Right cardiac atrium (tissue), 5 donors: ENCODE measurements at regions of chr4 and their contacts with region 1.

Region 1: DNA sequence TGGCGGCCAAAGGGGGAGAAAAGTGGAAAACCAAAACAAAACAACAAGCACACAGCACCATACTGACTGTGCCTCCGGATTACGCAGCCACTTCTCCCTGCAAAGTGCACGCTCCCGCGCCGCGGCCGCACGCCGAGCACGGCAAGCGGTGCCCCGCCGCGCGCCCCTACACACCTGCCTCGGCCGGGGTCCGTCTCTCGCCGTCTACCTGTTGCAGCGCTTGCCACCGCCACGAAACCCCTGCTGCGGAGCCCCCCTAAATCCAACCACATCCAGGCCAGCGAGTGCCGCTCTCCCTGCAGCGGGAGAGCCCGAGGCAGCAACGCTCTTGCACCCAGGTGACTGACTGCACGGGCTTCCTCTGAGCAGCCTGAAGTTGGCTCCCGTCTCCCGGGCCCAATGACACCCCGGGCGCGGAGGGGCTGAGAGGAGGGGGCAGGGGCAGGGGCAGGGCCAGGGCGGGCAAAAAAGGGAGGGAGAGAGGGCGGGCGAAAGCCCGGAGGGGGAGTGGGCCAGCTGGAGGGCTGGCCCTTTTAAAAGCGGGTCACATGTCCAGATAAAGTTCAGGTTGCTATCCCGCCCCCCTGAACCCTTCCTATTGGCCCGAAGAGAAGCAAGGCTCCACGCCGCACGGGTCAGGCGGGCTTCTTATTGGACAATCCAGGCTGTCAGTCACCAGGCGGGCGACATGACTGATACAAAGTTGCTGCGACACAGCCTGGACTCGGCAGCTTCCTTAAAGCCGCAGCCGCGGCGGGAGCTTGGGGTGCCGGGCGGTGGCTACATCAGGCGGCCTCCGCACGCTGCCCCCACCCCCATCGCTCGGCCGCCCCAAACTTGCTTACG is at the start of gene NR3C2:
- DNase-seq: peak; percentile 99
- ATAC-seq: peak; percentile 96 to 97
- H3K4me3 ChIP-seq: peak within 1 kb of the TSS; percentile 71
- H3K27ac ChIP-seq: peak within 1 kb of the TSS; percentile 89
- H3K4me1 ChIP-seq: no peaks in the 10 kb centered on the region
- H3K27me3 ChIP-seq: no peaks in the 10 kb centered on the region
- total RNA-seq, gene NR3C2: 19.8 to 27.9 (median 25.1) TPM

Region 2: DNA sequence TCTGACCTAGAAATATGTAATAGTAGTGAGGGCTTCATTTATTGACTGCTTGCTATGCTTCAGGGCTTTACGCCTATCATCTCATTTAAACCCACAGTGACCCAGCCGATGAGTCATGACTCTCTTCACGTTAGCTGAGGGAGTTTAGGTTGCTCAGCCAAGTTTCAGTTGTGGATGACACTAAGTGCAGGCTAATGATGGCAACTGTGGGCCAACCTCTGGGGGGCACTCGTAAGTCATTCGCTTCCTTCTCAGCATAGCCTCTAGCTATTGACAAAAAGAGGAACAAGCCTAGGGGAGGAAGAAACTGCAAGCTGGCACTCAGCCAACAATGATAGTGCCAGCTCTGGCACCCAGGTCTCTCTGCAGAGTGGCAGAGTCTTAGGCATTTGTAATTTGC is 385.3 kb before region 1 on chr4:
- intact Hi-C with region 1: loop called in 1 of 4 experiments (anchors 10 kb)
- DNase-seq: peak; percentile 46 to 83 (median 76)
- ATAC-seq: peak; percentile 28 to 60
- H3K4me3 ChIP-seq: no peak overlapping the region
- H3K27ac ChIP-seq: no peak overlapping the region
- H3K4me1 ChIP-seq: peaks cover 12% of the 10 kb centered on the region
- H3K27me3 ChIP-seq: no peaks in the 10 kb centered on the region

Region 3: DNA sequence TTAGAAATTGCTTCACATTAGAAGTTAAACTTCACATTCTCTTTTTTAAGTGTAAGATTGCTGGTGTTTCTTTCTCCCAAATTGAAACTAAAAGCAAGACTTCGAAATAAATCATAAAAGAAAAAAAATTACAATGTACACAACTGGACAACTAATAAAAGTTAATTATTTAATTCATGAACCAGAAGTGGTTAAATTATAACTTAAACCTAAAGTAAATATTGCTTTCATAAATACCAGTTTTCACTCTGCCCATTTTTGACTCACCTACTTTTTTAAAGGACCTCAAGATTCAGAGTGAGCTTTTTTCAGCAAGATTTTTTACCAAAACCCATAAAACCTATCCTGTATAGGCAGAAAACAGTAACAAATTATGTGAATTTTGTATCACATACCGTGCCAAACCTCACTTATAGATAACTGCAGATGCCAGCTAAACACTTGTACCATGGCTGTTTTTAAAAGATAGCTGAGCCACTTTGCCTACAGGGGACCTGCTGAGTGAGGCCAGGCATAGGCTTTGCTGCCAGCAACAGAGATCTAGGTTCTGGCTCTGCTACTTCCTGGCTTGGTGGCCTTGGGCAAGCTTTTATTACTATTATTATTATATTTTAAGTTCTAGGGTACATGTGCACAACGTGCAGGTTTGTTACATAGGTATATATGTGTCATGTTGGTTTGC is 259.8 kb before region 1 on chr4:
- intact Hi-C with region 1: loop called in 1 of 4 experiments (anchors 10 kb)
- DNase-seq: no peak
- ATAC-seq: no peak
- H3K4me3 ChIP-seq: no peak overlapping the region
- H3K27ac ChIP-seq: no peak overlapping the region
- H3K4me1 ChIP-seq: no peaks in the 10 kb centered on the region
- H3K27me3 ChIP-seq: no peaks in the 10 kb centered on the region

Region 4: DNA sequence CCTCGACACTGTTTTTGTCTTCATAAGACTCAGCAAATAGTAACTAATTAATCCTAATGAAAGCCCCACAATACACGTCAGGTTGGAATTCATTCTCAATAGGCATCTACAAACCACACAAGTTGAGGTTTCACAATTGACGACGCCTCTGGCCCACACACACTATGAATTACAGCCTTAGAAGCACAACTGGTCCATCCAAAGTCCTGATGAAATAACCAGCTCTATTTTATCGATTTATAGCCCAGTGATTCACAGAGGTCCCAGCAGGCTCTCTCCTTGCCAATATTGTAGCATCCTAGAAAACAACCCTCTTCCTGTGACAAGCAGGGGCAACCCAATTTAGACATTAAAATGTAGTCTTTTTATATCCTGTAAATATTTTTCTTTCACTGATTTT is 112.0 kb before region 1 on chr4:
- intact Hi-C with region 1: no loop called
- DNase-seq: no peak
- ATAC-seq: no peak
- H3K4me3 ChIP-seq: no peak overlapping the region
- H3K27ac ChIP-seq: no peak overlapping the region
- H3K4me1 ChIP-seq: peaks cover 6% of the 10 kb centered on the region
- H3K27me3 ChIP-seq: no peaks in the 10 kb centered on the region

Region 5: DNA sequence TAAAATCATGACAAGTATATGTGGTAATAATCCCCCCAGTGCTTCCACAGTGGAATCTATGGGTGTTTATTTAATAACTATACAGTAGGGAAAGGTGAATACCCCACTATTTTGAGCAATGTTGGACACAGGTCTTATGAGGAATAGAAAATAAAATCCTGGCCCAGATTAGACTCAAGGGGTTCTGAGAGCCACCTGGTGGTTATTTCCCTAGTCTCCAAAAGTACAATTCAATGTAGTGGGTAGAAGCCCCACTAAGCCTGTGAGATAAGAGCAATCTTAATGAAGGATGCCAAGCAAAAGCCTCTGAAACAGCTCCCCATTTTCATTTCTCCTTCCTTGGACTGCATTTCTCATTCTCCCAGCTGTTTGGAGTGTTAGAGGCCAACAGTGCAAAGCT is 328.2 kb after region 1 on chr4:
- intact Hi-C with region 1: no loop called
- DNase-seq: no peak
- ATAC-seq: no peak
- H3K4me3 ChIP-seq: no peak overlapping the region
- H3K27ac ChIP-seq: no peak overlapping the region
- H3K4me1 ChIP-seq: no peaks in the 10 kb centered on the region
- H3K27me3 ChIP-seq: no peaks in the 10 kb centered on the region